ENCODE measurements at regions of chr4 and their contacts with region 1.

Region 1: DNA sequence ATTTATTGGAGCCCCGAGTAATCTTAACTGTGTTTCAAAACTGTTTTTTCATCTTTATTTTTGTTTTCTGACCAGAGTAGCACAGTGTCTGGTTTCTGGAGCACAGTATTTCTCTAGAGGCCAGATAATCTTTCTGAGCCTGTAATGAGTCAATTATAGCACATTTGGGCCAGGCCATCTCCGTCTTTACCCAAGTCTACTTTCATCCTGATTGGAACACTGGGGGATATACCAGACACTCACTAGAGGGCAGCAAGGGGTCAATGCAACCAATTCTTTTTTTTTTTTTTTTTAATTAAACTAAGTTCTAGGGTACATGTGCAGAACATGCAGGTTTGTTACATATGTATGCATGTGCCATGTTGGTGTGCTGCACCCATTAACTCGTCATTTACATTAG is 282.0 kb downstream of the ARHGAP24 start:
- DNase-seq: no peak
- ATAC-seq: no peak
- H3K4me3 Mint-ChIP-seq: no peak overlapping the region
- H3K27ac Mint-ChIP-seq: no peak overlapping the region
- H3K4me1 Mint-ChIP-seq: no peaks in the 10 kb centered on the region
- H3K27me3 Mint-ChIP-seq: no peaks in the 10 kb centered on the region

Region 2: GRCh38 chr4:85734424-85734831 is 22.5 kb before region 1 on chr4:
- CTCF ChIA-PET with region 1: no interaction called
- POLR2A ChIA-PET with region 1: no interaction called
- intact Hi-C with region 1: no loop called
- DNase-seq: no peak
- ATAC-seq: no peak
- H3K4me3 Mint-ChIP-seq: no peak overlapping the region
- H3K27ac Mint-ChIP-seq: no peak overlapping the region
- H3K4me1 Mint-ChIP-seq: no peaks in the 10 kb centered on the region
- H3K27me3 Mint-ChIP-seq: no peaks in the 10 kb centered on the region

Region 3: DNA sequence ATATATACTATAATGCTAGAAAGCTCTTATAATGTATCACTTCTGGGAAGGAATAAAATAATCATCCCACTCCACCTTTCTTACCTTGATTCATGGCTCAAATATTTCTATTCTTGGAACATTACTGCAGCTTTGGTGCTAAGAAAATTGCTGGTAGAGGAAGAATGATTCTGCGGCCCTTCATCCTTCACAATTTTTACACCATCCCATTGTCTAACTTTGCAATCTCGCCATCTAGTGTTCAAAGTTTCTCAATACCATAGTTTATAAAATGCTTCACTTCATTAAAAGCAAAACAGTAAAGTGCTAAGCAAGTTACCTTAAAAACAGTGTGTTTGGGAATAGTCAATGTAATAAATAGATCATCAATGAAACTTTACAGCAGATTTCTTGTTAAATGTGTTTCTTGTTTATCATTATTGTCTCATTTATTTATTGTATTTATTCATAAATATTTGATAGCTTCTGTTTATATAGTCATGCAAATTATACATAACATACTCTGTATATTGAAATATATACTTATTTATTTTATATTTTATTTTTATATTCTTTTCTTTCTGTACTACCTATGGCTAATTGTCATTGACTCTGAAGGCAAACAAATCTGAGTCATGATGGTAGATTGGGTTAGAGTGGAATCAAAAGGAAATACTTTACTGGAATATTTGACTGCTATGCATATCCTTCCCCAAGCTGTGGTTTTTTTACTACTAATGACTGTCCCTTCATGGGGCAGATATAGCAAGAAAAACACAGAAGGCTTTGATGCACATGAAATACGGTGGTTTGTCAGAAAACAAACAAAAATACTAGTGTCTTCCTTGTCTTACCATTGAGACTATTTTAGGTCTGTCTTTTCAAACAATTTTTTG is 212.2 kb after region 1 on chr4:
- CTCF ChIA-PET with region 1: no interaction called
- POLR2A ChIA-PET with region 1: no interaction called
- intact Hi-C with region 1: loop called in 1 of 2 experiments (anchors 5 kb)
- DNase-seq: no peak
- ATAC-seq: no peak
- H3K4me3 Mint-ChIP-seq: no peak overlapping the region
- H3K27ac Mint-ChIP-seq: no peak overlapping the region
- H3K4me1 Mint-ChIP-seq: no peaks in the 10 kb centered on the region
- H3K27me3 Mint-ChIP-seq: peaks cover 2% of the 10 kb centered on the region

Region 4: DNA sequence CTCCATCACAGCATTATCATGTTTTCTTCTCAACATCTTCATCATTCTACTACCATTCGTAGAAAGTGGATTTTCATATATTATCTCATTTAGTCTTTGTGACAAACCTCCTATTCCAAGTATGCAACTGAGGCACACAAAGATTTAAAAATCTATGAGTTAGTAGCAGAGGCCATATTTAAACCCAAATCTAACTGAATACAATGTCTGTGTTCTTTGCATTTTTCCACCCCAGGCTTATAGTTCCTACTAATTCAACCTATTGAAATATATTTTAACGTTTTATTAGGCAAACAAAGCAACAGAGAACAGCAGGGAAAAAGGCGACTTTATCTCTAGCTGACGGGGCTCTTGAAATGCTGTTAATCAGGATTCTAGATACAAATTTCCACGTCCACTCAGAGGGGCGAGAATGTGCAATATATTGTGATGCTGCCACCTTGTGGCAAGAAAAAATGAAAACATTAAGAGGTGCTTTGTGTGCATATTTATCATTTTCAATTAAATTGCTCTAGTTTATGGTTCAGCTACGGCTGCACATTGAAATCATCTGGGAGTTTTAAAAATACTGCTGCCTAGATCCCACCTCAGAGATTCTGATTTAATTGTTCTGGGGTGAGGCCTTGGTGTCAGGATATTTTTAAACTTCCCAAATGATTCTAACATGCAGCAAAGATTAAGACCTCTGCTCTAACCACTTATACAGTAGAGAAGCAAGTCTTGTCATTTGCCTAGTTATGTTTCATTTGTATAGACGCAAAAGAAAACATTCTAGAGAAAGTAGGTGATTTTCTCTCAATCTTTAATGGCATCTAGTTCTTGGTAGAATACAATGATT is 287.0 kb after region 1 on chr4:
- CTCF ChIA-PET with region 1: no interaction called
- POLR2A ChIA-PET with region 1: no interaction called
- intact Hi-C with region 1: loop called in 1 of 2 experiments (anchors 5 kb)
- DNase-seq: peak; percentile 7
- ATAC-seq: no peak
- H3K4me3 Mint-ChIP-seq: no peak overlapping the region
- H3K27ac Mint-ChIP-seq: no peak overlapping the region
- H3K4me1 Mint-ChIP-seq: no peaks in the 10 kb centered on the region
- H3K27me3 Mint-ChIP-seq: no peaks in the 10 kb centered on the region